K562 (cell line): ENCODE measurements at regions of chr6 and their contacts with region 1.

Region 1: GRCh38 chr6:36874443-36875249 is at the start of gene PPIL1:
- DNase-seq: peak; percentile 95 to 96 (median 96)
- ATAC-seq: peak; percentile 91
- H3K4me3 ChIP-seq: peak within 1 kb of the TSS; percentile 76
- H3K27ac ChIP-seq: peak within 1 kb of the TSS; percentile 100
- H3K4me1 ChIP-seq: peaks cover 0 to 28% of the 10 kb centered on the region in 2 experiments; a peak in 2 of 5 replicates
- H3K27me3 ChIP-seq: no peaks in the 10 kb centered on the region
- CTCF ChIP-seq: 0 out of 6 replicates have a peak, but pooled peaks of 1 of the 3 experiments have one; percentile 0
- EP300 ChIP-seq: no peak
- POLR2A ChIP-seq: peak; percentile 90
- RAD21 ChIP-seq: 0 out of 4 replicates have a peak, but pooled peaks of 1 of the 2 experiments have one; percentile 9
- polyA plus RNA-seq, gene PPIL1: 195 to 205 TPM

Region 2: DNA sequence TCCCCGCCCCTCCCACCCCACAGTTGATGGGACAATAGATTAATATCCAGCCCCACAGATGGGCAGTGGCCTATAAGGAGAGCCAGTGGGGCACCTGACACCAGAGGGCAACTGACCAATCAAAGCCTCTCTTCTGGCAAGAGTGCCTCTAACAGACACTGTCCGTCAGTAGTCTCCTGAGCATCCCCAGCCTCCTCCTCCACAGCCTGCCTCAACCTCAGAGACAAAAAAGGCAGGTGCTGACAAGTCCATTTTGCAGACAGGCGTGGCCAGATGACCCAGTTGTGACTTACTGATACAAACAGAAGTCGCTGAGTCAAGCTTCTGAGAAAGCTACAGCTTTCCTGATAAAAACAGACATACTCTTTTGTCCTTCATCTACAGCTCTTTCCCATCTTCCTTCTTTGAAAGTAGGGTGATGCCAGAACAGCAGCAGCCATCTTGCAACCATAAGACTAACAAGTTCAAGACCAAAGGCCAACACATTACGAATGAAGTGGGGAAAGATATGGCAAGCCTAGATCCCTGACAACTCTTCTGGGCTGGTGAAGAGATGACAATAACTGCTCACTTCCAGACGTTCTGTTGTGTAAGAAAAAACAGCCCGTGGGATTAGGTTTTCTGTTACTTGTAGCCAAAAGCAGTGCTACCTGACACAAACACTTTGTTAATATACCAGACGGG is 12.3 kb before region 1 on chr6:
- CTCF ChIA-PET with region 1: no interaction called
- POLR2A ChIA-PET with region 1: interaction called, 80 read pairs
- in situ Hi-C with region 1: no loop called
- intact Hi-C with region 1: no loop called
- DNase-seq: peak; percentile 82 to 97 (median 88)
- ATAC-seq: peak; percentile 96
- H3K4me3 ChIP-seq: no peak overlapping the region
- H3K27ac ChIP-seq: peak overlapping the region; percentile 84
- H3K4me1 ChIP-seq: peaks cover 30 to 42% of the 10 kb centered on the region in 2 experiments
- H3K27me3 ChIP-seq: no peaks in the 10 kb centered on the region
- CTCF ChIP-seq: no peak
- EP300 ChIP-seq: peak; percentile 96
- POLR2A ChIP-seq: peak; percentile 46; the same call in 1 of the 2 replicates
- RAD21 ChIP-seq: no peak; a peak in 1 of 4 replicates

Region 3: DNA sequence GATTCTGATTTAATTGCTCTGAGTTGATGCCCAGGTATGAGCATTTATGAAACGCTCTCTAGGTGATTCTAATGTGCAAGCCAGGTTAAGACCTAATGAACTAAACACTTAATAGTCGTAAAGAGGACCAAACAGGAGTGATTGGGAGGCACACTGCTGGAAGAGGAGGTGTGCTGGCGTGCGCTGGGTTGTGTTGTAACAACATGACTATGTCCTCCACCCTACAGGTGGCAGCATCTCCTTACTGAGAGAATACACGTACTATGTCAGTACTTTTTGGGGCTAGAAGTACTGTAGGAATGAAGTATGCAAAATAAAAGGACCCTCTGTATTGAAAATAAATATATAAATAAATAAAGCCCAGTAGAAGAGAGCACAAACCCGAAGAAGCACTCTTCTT is 23.0 kb after region 1 on chr6:
- CTCF ChIA-PET with region 1: no interaction called
- POLR2A ChIA-PET with region 1: interaction called, 12 read pairs
- in situ Hi-C with region 1: no loop called
- intact Hi-C with region 1: no loop called
- DNase-seq: peak in 2 of 4 experiments; percentile 39 to 41
- ATAC-seq: peak; percentile 85
- H3K4me3 ChIP-seq: no peak overlapping the region
- H3K27ac ChIP-seq: no peak overlapping the region
- H3K4me1 ChIP-seq: no peaks in the 10 kb centered on the region
- H3K27me3 ChIP-seq: no peaks in the 10 kb centered on the region
- CTCF ChIP-seq: peak; percentile 35 to 48 (median 36); a peak in 3 of 6 replicates
- EP300 ChIP-seq: no peak
- POLR2A ChIP-seq: no peak
- RAD21 ChIP-seq: peak in 1 of 2 experiments; percentile 21; a peak in 1 of 4 replicates